ENCODE measurements at regions of chr3 and their contacts with region 1.

Region 1: GRCh38 chr3:25558111-25558510 is 106.6 kb downstream of the TOP2B start:
- DNase-seq: peak in 4 of 5 donors; percentile 28 to 61 (median 53)
- H3K4me3 ChIP-seq: no peak overlapping the region
- H3K27ac ChIP-seq: peak overlapping the region in 1 of 2 donors; percentile 60
- H3K4me1 ChIP-seq: peaks cover 18% of the 10 kb centered on the region
- H3K27me3 ChIP-seq: no peaks in the 10 kb centered on the region
- CTCF ChIP-seq: no peak
- EP300 ChIP-seq: no peak
- POLR2A ChIP-seq: no peak

Region 2: GRCh38 chr3:25380222-25380770 is 177.8 kb before region 1 on chr3:
- intact Hi-C with region 1: no loop called
- DNase-seq: no peak
- H3K4me3 ChIP-seq: no peak overlapping the region
- H3K27ac ChIP-seq: no peak overlapping the region
- H3K4me1 ChIP-seq: no peaks in the 10 kb centered on the region
- H3K27me3 ChIP-seq: no peaks in the 10 kb centered on the region
- CTCF ChIP-seq: no peak
- EP300 ChIP-seq: no peak
- POLR2A ChIP-seq: no peak

Region 3: GRCh38 chr3:25427942-25428788 is 129.9 kb before region 1 on chr3 and contains the start of gene RARB:
- intact Hi-C with region 1: loop called in 1 of 4 experiments (anchors 10 kb)
- DNase-seq: peak; percentile 76 to 85 (median 81)
- H3K4me3 ChIP-seq: peak within 1 kb of the TSS; percentile 59
- H3K27ac ChIP-seq: peak within 1 kb of the TSS; percentile 75 to 88
- H3K4me1 ChIP-seq: peaks cover 8% of the 10 kb centered on the region
- H3K27me3 ChIP-seq: no peaks in the 10 kb centered on the region
- CTCF ChIP-seq: no peak
- EP300 ChIP-seq: peak; percentile 17
- POLR2A ChIP-seq: peak; percentile 89
- total RNA-seq, gene RARB: 5.5 to 13.4 (median 8.2) TPM

Region 4: DNA sequence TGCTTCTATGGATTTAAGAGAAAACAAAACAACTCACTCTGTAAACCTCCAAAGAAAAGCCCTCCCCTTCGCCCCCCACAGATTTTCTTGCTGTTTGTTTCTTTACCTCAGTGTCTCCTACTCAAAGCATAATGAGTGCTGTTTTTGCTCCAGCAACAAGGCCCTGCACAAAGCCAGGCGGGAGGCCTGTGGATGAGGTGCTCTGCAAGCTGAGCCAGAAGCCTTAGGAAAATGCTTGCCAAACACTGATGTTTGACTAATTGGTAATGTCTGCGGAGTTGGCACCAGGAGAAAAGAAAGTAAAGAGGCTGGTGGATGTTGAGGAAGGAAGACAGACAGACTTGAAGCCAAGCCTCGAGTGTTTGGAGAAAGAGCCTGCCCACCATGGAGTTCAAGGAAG is 30.3 kb before region 1 on chr3:
- intact Hi-C with region 1: no loop called
- DNase-seq: no peak
- H3K4me3 ChIP-seq: no peak overlapping the region
- H3K27ac ChIP-seq: no peak overlapping the region
- H3K4me1 ChIP-seq: no peaks in the 10 kb centered on the region
- H3K27me3 ChIP-seq: no peaks in the 10 kb centered on the region
- CTCF ChIP-seq: no peak
- EP300 ChIP-seq: no peak
- POLR2A ChIP-seq: no peak

Measured in ovary (tissue), 10 donors.